OCI-LY7 (cell line): ENCODE measurements at regions of chr11 and their contacts with region 1.

Region 1: GRCh38 chr11:73177778-73178577 is 35.9 kb upstream of the FCHSD2 start:
- DNase-seq: peak; percentile 94
- H3K4me3 ChIP-seq: no peak overlapping the region
- H3K27ac ChIP-seq: peak overlapping the region; percentile 41
- H3K4me1 ChIP-seq: peaks cover 43% of the 10 kb centered on the region
- CTCF ChIP-seq: peak; percentile 98

Region 2: GRCh38 chr11:72724851-72725730 is 452.9 kb before region 1 on chr11:
- CTCF ChIA-PET with region 1: interaction called, 3 read pairs
- POLR2A ChIA-PET with region 1: no interaction called
- intact Hi-C with region 1: loop called (anchors 1 kb)
- DNase-seq: peak; percentile 90
- H3K4me3 ChIP-seq: no peak overlapping the region
- H3K27ac ChIP-seq: no peak overlapping the region
- H3K4me1 ChIP-seq: peaks cover 34% of the 10 kb centered on the region
- CTCF ChIP-seq: peak; percentile 97

Region 3: DNA sequence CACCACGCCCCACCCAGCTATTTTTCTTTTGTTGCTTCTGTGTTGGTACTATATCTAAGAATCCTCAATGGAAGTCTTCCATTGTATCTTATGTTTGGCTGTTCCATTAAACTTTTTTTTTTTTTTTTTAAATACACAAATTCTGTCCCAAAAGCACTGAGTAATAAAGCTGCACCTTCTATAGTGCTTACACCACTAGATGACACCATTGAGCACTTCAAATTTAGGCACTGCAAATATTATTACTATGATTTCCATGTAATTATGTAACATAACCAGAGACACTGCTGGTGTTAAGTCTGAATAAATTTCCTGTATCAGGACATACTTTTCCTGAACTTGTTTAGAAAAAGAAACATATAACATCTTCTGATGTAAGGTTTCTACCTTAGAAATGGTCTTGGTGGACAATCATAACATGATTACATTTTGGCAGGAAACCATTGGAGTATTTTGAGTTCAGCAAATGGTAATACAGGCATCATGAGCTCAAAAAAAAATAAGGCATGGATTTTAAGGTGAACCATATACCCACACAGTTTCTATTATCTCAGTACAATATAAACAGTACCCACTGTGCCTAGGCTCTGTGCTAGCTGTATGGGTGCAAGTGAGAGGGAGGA is 253.3 kb before region 1 on chr11:
- CTCF ChIA-PET with region 1: interaction called, 4 read pairs
- POLR2A ChIA-PET with region 1: no interaction called
- intact Hi-C with region 1: loop called (anchors 1 kb)
- DNase-seq: peak; percentile 53
- H3K4me3 ChIP-seq: no peak overlapping the region
- H3K27ac ChIP-seq: no peak overlapping the region
- H3K4me1 ChIP-seq: no peaks in the 10 kb centered on the region
- CTCF ChIP-seq: peak; percentile 78

Region 4: GRCh38 chr11:73147771-73148681 is 30.0 kb before region 1 on chr11:
- CTCF ChIA-PET with region 1: interaction called, 17 read pairs
- POLR2A ChIA-PET with region 1: interaction called, 136 read pairs
- intact Hi-C with region 1: no loop called
- DNase-seq: no peak
- H3K4me3 ChIP-seq: no peak overlapping the region
- H3K27ac ChIP-seq: peak overlapping the region; percentile 44
- H3K4me1 ChIP-seq: peaks cover 98% of the 10 kb centered on the region
- CTCF ChIP-seq: no peak

Region 5: GRCh38 chr11:73164803-73165540 is 13.0 kb before region 1 on chr11:
- CTCF ChIA-PET with region 1: interaction called, 3 read pairs
- POLR2A ChIA-PET with region 1: interaction called, 20 read pairs
- intact Hi-C with region 1: no loop called
- DNase-seq: no peak
- H3K4me3 ChIP-seq: no peak overlapping the region
- H3K27ac ChIP-seq: peak overlapping the region; percentile 17
- H3K4me1 ChIP-seq: peaks cover 81% of the 10 kb centered on the region
- CTCF ChIP-seq: no peak